B cell (primary cell): ENCODE measurements at regions of chr6 and their contacts with region 1.

Region 1: GRCh38 chr6:83615025-83615999 is 93.6 kb downstream of the SNAP91 start:
- DNase-seq: peak; percentile 33
- ATAC-seq: no peak
- H3K4me3 ChIP-seq: no peak overlapping the region
- H3K4me3 Mint-ChIP-seq: no peak overlapping the region
- H3K27ac ChIP-seq: no peak overlapping the region
- H3K27ac Mint-ChIP-seq: no peak overlapping the region
- H3K4me1 ChIP-seq: no peaks in the 10 kb centered on the region
- H3K4me1 Mint-ChIP-seq: no peaks in the 10 kb centered on the region
- H3K27me3 ChIP-seq: no peaks in the 10 kb centered on the region
- H3K27me3 Mint-ChIP-seq: no peaks in the 10 kb centered on the region
- CTCF ChIP-seq: peak; percentile 69

Region 2: DNA sequence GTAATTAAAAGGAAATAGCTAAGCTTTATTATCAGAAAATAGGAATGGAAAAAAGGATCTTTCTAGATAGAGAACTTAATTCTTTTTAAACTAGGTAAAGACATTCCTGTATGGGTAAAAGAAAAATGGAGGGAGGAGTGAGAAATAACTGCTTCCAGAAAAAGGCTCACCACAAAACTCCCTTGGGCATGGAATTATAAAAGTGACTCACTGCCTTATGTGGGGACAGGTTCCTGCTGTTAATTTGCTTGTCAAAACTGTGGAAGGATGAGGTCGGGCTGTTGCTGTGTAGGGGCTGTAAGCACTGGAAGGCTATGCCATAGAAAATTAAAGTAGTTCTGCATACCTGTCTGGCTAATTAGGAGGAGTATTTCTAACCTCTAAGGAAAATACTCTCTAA is 708.4 kb before region 1 on chr6:
- CTCF ChIA-PET with region 1: no interaction called
- POLR2A ChIA-PET with region 1: no interaction called
- intact Hi-C with region 1: no loop called
- DNase-seq: no peak
- ATAC-seq: no peak
- H3K4me3 ChIP-seq: no peak overlapping the region
- H3K4me3 Mint-ChIP-seq: no peak overlapping the region
- H3K27ac ChIP-seq: no peak overlapping the region
- H3K27ac Mint-ChIP-seq: no peak overlapping the region
- H3K4me1 ChIP-seq: no peaks in the 10 kb centered on the region
- H3K4me1 Mint-ChIP-seq: no peaks in the 10 kb centered on the region
- H3K27me3 ChIP-seq: no peaks in the 10 kb centered on the region
- H3K27me3 Mint-ChIP-seq: no peaks in the 10 kb centered on the region
- CTCF ChIP-seq: no peak

Region 3: GRCh38 chr6:83221889-83222479 is 393.3 kb before region 1 on chr6:
- CTCF ChIA-PET with region 1: no interaction called
- POLR2A ChIA-PET with region 1: no interaction called
- intact Hi-C with region 1: no loop called
- DNase-seq: peak; percentile 40
- ATAC-seq: no peak
- H3K4me3 ChIP-seq: no peak overlapping the region
- H3K4me3 Mint-ChIP-seq: no peak overlapping the region
- H3K27ac ChIP-seq: no peak overlapping the region
- H3K27ac Mint-ChIP-seq: no peak overlapping the region
- H3K4me1 ChIP-seq: no peaks in the 10 kb centered on the region
- H3K4me1 Mint-ChIP-seq: no peaks in the 10 kb centered on the region
- H3K27me3 ChIP-seq: peaks cover 0 to 3% (median 0%) of the 10 kb centered on the region in 4 experiments
- H3K27me3 Mint-ChIP-seq: peaks cover 11% of the 10 kb centered on the region
- CTCF ChIP-seq: peak; percentile 68

Region 4: GRCh38 chr6:83792846-83793245 is 177.5 kb after region 1 on chr6:
- CTCF ChIA-PET with region 1: no interaction called
- POLR2A ChIA-PET with region 1: no interaction called
- intact Hi-C with region 1: no loop called
- DNase-seq: no peak
- ATAC-seq: no peak
- H3K4me3 ChIP-seq: no peak overlapping the region
- H3K4me3 Mint-ChIP-seq: no peak overlapping the region
- H3K27ac ChIP-seq: no peak overlapping the region
- H3K27ac Mint-ChIP-seq: no peak overlapping the region
- H3K4me1 ChIP-seq: no peaks in the 10 kb centered on the region
- H3K4me1 Mint-ChIP-seq: no peaks in the 10 kb centered on the region
- H3K27me3 ChIP-seq: no peaks in the 10 kb centered on the region
- H3K27me3 Mint-ChIP-seq: no peaks in the 10 kb centered on the region
- CTCF ChIP-seq: no peak

Region 5: GRCh38 chr6:85323435-85324040 is 1708.2 kb after region 1 on chr6:
- CTCF ChIA-PET with region 1: interaction called, 20 read pairs
- POLR2A ChIA-PET with region 1: no interaction called
- intact Hi-C with region 1: no loop called
- DNase-seq: peak; percentile 54
- ATAC-seq: no peak
- H3K4me3 ChIP-seq: no peak overlapping the region
- H3K4me3 Mint-ChIP-seq: no peak overlapping the region
- H3K27ac ChIP-seq: no peak overlapping the region
- H3K27ac Mint-ChIP-seq: no peak overlapping the region
- H3K4me1 ChIP-seq: no peaks in the 10 kb centered on the region
- H3K4me1 Mint-ChIP-seq: no peaks in the 10 kb centered on the region
- H3K27me3 ChIP-seq: no peaks in the 10 kb centered on the region
- H3K27me3 Mint-ChIP-seq: peaks cover 8% of the 10 kb centered on the region
- CTCF ChIP-seq: peak; percentile 77